ENCODE measurements at regions of chr4 and their contacts with region 1.

Region 1: DNA sequence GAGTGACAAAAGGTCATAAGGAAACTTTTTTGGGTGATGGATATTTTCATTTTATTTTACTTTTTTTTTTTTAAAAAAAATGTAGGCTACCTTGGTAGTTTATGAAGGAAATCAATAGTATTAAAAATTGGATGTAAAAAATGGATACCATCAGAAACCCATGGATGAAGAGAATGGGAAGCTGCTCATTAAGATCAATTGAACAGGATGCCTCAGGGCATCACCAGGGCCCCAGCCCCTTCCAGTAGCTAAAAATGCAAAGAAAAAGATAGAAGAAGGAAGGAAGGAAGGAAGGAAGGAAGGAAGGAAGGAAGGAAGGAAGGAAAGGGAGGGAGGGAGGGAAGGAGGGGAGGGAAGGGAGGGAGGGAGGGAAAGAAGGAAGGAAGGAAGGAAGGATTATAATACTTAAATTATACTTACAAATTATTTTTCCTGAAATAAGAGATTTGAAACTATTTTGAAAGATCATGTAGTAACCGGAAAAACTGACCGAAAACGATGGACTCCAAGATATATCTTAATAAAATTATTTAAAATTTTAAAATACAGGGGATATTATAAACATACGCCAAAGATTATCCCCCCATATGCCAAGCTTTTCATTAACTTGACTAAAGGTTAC is 24.1 kb downstream of the OSTC start:
- DNase-seq: no peak
- ATAC-seq: no peak
- H3K4me3 ChIP-seq: no peak overlapping the region
- H3K27ac ChIP-seq: no peak overlapping the region
- H3K4me1 ChIP-seq: no peaks in the 10 kb centered on the region
- H3K27me3 ChIP-seq: no peaks in the 10 kb centered on the region
- CTCF ChIP-seq: no peak

Region 2: GRCh38 chr4:108060164-108060563 is 614.3 kb before region 1 on chr4:
- intact Hi-C with region 1: no loop called
- DNase-seq: no peak
- ATAC-seq: peak in 6 of 8 donors; percentile 54 to 73 (median 65)
- H3K4me3 ChIP-seq: no peak overlapping the region
- H3K27ac ChIP-seq: no peak overlapping the region
- H3K4me1 ChIP-seq: no peaks in the 10 kb centered on the region
- H3K27me3 ChIP-seq: peaks cover 0 to 26% (median 5%) of the 10 kb centered on the region in 7 donors
- CTCF ChIP-seq: peak in 7 of 9 donors; percentile 24 to 61 (median 55)

Region 3: DNA sequence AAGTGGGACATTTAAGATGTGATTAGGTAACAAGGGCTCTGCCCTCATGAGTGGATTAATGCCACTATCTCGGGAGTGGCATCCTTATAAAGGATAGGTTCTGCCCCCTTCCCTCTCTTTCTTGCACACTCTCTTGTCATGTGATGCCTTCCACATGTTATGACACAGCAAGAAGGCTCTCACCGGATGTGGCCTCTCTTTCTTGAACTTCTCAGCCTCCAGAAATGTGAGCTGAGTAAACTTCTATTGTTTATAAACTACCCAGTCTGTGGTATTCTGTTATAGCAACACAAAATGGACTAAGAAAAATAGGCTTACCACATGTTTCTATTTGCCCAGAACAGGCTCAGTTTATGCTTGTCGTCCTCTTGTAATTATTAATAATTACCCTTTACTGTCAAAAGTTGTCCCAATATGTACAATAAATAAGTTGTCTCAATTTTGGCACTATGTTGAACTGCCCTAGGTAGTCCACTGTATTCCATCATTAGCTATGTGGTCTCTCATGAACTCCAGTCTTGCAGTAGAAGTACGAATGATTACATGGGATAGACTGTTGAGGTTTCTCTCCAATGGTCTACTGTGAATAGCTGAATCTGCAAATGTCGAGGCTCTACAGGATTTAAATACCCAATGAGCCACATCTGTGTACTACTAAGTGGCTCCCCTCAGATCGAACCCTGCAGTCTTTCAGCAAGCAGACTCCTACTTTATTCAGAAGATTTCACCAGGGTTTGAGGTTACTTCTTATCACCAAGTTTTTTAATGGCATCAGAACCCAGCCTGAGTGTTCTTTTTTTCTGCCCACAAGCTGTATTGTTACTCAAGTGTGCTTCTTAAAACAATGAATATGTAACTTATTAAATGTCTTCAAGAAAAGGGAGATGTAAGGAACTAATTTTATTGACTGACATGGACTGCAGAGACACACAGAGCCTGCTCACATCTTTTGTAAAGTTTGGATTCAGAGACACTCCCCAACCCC is 403.7 kb before region 1 on chr4:
- intact Hi-C with region 1: no loop called
- DNase-seq: no peak
- ATAC-seq: no peak
- H3K4me3 ChIP-seq: no peak overlapping the region
- H3K27ac ChIP-seq: no peak overlapping the region
- H3K4me1 ChIP-seq: no peaks in the 10 kb centered on the region
- H3K27me3 ChIP-seq: no peaks in the 10 kb centered on the region
- CTCF ChIP-seq: no peak

Region 4: DNA sequence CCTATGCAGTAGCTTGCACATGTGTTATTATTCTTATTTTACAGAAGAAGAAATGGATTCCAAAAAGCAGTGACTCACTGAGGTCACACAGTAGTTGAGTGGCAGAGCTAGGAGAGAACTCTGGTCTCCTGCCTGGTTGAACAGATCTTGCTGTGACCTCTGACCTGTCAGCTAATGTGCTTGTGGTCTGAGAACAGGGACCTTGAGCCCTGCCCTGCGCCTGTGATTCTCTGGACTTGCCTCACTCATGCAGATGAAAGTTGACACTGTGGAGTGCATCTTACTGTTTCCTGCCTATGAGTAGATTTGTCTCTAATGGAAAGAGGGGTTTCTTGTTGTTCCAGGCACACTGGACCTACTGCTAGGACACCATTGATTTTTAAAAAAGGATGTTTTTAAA is 56.1 kb after region 1 on chr4:
- intact Hi-C with region 1: loop called in 1 of 10 experiments (anchors 1 kb)
- DNase-seq: no peak
- ATAC-seq: no peak
- H3K4me3 ChIP-seq: no peak overlapping the region
- H3K27ac ChIP-seq: no peak overlapping the region
- H3K4me1 ChIP-seq: no peaks in the 10 kb centered on the region
- H3K27me3 ChIP-seq: peaks cover 0 to 3% (median 0%) of the 10 kb centered on the region in 7 donors
- CTCF ChIP-seq: no peak

Region 5: GRCh38 chr4:108828620-108829019 is 154.2 kb after region 1 on chr4:
- intact Hi-C with region 1: loop called in 1 of 10 experiments (anchors 10 kb)
- DNase-seq: no peak
- ATAC-seq: peak in 1 of 8 donors; percentile 40
- H3K4me3 ChIP-seq: no peak overlapping the region
- H3K27ac ChIP-seq: no peak overlapping the region
- H3K4me1 ChIP-seq: peaks cover 0 to 31% (median 12%) of the 10 kb centered on the region in 9 donors
- H3K27me3 ChIP-seq: no peaks in the 10 kb centered on the region
- CTCF ChIP-seq: no peak